SK-N-SH (cell line): ENCODE measurements at regions of chr1 and their contacts with region 1.

Region 1: DNA sequence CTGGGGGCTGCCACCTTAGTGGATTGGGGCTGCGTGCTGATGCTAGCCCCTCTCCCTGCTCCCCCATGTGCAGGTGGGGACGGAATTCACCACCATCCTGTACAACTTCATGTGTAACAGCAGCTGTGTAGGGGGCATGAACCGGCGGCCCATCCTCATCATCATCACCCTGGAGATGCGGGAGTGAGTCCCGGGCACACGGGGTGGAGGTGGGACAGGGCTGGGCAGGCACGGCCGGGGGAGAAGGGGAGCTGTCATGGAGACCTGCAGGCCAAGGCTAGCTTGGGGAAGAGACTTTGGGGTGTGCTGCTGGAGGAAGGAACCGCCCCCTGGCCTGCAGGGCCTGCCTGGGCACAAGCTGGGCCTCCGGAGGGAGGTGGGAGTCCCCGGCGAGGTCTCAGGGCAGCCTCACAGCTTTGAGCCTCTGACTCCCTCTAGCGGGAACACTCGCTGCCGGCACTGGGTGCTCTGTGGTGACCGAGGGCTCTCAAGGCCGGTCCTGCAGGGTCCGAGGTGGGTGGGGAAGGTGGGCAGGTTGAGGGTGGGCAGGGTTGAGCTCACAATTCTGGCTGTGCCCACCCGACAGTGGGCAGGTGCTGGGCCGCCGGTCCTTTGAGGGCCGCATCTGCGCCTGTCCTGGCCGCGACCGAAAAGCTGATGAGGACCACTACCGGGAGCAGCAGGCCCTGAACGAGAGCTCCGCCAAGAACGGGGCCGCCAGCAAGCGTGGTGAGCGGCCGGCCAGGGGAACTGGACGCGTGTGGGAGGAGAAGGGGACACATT is 25.0 kb upstream of the CCDC27 start:
- DNase-seq: peak; percentile 78
- H3K4me3 ChIP-seq: no peak overlapping the region
- H3K27ac ChIP-seq: no peak overlapping the region
- H3K4me1 ChIP-seq: peaks cover 0 to 13% of the 10 kb centered on the region in 2 experiments; a peak in 1 of 4 replicates
- H3K27me3 ChIP-seq: no peaks in the 10 kb centered on the region
- CTCF ChIP-seq: peak; percentile 34
- EP300 ChIP-seq: no peak
- RAD21 ChIP-seq: peak; percentile 50

Region 2: GRCh38 chr1:3624200-3625136 is 102.8 kb before region 1 on chr1 and contains the start of gene TPRG1L:
- CTCF ChIA-PET with region 1: interaction called, 32 read pairs
- POLR2A ChIA-PET with region 1: no interaction called
- DNase-seq: peak; percentile 99
- H3K4me3 ChIP-seq: peak within 1 kb of the TSS; percentile 84 to 93
- H3K27ac ChIP-seq: peak within 1 kb of the TSS; percentile 20 to 77; a peak in 3 of 4 replicates
- H3K4me1 ChIP-seq: peaks cover 0 to 40% of the 10 kb centered on the region in 2 experiments; a peak in 2 of 4 replicates
- H3K27me3 ChIP-seq: no peaks in the 10 kb centered on the region
- CTCF ChIP-seq: no peak
- EP300 ChIP-seq: no peak
- RAD21 ChIP-seq: no peak
- polyA plus RNA-seq, gene TPRG1L: 25.9 and 35.5 TPM in 2 replicates

Region 3: GRCh38 chr1:3649342-3650247 is 77.6 kb before region 1 on chr1 and contains the start of gene WRAP73:
- CTCF ChIA-PET with region 1: interaction called, 10 read pairs
- POLR2A ChIA-PET with region 1: no interaction called
- DNase-seq: peak; percentile 95
- H3K4me3 ChIP-seq: peak within 1 kb of the TSS; percentile 83 to 98
- H3K27ac ChIP-seq: peak within 1 kb of the TSS in 1 of 2 experiments; percentile 75; a peak in 1 of 4 replicates
- H3K4me1 ChIP-seq: peaks cover 0 to 12% of the 10 kb centered on the region in 2 experiments; a peak in 2 of 4 replicates
- H3K27me3 ChIP-seq: no peaks in the 10 kb centered on the region; the same call in 1 of the 2 replicates
- CTCF ChIP-seq: peak; percentile 21; the same call in 1 of the 2 replicates
- EP300 ChIP-seq: no peak
- RAD21 ChIP-seq: 0 out of 2 replicates have a peak, but pooled peaks have one; percentile 13
- polyA plus RNA-seq, gene WRAP73: 61.9 and 67.8 TPM in 2 replicates

Region 4: DNA sequence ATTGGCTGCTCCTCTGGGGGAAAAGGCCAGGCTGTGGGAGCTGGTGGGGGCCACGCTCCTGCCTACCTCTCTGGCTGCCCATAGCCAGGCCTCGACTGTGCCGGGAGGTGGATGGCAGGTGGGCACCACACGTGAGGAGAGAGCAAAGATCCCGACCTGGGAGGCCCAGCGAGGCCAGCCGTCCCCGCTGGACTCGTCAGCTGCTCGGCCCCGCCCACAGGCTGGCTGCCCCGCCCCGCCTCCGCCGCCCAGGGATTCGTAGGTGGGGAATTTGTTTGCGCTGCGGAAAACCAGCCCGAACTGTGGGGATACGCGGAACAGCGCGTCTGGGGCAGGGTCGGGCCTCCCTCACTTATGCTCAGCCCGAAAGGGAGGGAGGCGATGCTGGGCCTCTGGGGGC is 43.2 kb before region 1 on chr1:
- CTCF ChIA-PET with region 1: interaction called, 16 read pairs
- POLR2A ChIA-PET with region 1: no interaction called
- DNase-seq: no peak
- H3K4me3 ChIP-seq: no peak overlapping the region
- H3K27ac ChIP-seq: no peak overlapping the region
- H3K4me1 ChIP-seq: no peaks in the 10 kb centered on the region; a peak in 1 of 4 replicates
- H3K27me3 ChIP-seq: no peaks in the 10 kb centered on the region
- CTCF ChIP-seq: no peak
- EP300 ChIP-seq: no peak
- RAD21 ChIP-seq: no peak

Region 5: GRCh38 chr1:3695326-3696217 is 31.7 kb before region 1 on chr1:
- CTCF ChIA-PET with region 1: interaction called, 369 read pairs
- POLR2A ChIA-PET with region 1: no interaction called
- DNase-seq: peak; percentile 96
- H3K4me3 ChIP-seq: no peak overlapping the region
- H3K27ac ChIP-seq: no peak overlapping the region
- H3K4me1 ChIP-seq: peaks cover 0 to 43% of the 10 kb centered on the region in 2 experiments; a peak in 1 of 4 replicates
- H3K27me3 ChIP-seq: no peaks in the 10 kb centered on the region
- CTCF ChIP-seq: peak; percentile 61
- EP300 ChIP-seq: no peak
- RAD21 ChIP-seq: peak; percentile 68

Region 6: DNA sequence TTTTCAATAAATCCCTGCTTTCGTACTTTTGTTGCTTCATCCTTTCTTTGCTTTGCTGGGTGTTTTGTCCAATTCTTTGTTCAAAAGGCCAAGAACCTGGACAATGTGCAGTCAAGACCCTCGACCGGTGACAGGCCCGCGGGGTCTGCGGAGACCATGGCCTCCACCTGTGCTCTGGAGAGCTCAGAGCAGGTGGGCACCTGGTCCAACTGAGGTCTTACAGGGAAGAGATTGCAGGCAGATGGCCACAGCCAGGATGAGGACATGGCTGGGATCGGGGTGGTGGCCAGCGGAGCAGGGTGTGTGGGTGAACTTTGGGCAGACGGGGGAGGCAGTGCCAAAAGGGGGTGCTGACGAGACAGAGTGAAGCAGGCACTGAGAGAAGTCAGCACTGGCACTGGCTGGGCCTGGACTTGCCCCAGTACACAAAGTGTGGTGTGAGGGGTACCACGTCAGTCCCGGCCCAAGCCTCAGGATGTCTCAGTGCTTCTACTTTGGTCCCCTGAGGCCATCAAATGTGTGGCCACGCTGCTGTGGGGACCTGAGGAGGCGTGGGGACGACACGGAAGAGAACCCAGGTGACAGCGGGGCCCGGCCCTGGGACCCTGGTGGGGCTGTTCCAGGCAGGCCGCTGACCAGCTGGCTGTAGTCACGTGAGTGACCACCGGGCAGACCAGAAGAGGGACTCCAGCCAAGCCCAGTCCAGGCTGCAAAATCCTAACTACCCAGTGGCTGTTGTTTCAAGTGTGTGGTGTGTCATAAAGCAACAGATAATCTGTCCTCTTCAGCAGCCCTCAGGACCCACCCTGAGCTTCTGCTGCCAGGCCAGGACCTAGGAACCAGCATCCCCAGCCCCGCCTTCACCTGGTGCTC is 14.6 kb after region 1 on chr1:
- CTCF ChIA-PET with region 1: interaction called, 10 read pairs
- POLR2A ChIA-PET with region 1: no interaction called
- DNase-seq: no peak
- H3K4me3 ChIP-seq: no peak overlapping the region
- H3K27ac ChIP-seq: no peak overlapping the region
- H3K4me1 ChIP-seq: peaks cover 0 to 26% of the 10 kb centered on the region in 2 experiments; a peak in 1 of 4 replicates
- H3K27me3 ChIP-seq: no peaks in the 10 kb centered on the region
- CTCF ChIP-seq: no peak
- EP300 ChIP-seq: no peak
- RAD21 ChIP-seq: no peak